ENCODE measurements at regions of chr1 and their contacts with region 1.

Region 1: GRCh38 chr1:43968348-43968948 is 1.4 kb upstream of the DPH2 start:
- DNase-seq: peak; percentile 51
- H3K4me3 Mint-ChIP-seq: no peak overlapping the region
- H3K27ac Mint-ChIP-seq: no peak overlapping the region
- H3K4me1 Mint-ChIP-seq: no peaks in the 10 kb centered on the region
- H3K27me3 Mint-ChIP-seq: no peaks in the 10 kb centered on the region
- CTCF ChIP-seq: no peak

Region 2: DNA sequence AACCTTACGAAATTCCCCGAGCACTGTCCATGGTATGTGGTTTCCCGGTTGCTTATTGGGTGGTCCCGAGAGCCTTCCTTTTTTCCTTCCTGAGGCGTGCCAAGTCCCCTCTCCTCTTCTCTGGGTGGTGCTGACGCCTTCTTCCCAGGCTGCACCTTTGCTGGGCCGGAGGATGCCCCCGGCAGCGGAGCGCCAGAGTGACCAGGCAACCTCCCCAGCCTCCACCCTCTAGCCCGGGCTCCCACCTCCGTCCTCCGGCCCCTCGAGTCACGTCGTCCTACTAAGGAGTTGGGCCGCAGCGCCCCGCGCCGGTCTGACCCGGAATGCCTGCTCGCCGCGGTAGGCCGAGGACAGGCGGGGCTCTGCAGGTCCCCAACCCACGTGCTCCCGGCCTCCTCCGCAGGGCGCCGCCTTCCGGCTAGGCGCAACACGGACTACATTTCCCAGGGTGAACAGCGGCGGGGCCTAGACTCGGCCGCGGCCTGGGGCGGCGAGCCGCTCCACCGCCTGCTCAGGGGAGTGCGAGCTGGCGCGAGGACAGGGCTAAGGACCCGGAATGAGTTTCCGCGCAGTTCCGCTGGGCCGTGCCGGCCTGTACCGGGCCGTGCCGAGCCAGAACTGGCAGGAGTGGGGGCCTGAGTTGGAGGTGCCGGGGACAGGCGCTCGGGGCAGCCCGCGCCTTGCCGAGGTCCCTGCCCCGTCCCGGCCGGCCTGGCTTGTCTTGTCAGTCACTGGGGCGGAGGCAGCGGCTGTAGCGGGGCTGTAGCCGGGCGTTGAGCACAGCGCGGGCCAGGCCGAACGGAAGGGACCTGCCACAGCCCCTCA is 22.0 kb before region 1 on chr1 and contains the start of gene IPO13:
- CTCF ChIA-PET with region 1: interaction called, 11 read pairs
- POLR2A ChIA-PET with region 1: interaction called, 28 read pairs
- intact Hi-C with region 1: loop called (anchors 1 kb)
- DNase-seq: peak; percentile 94
- H3K4me3 Mint-ChIP-seq: peak within 1 kb of the TSS; percentile 99
- H3K27ac Mint-ChIP-seq: peak within 1 kb of the TSS; percentile 99
- H3K4me1 Mint-ChIP-seq: peaks cover 30% of the 10 kb centered on the region
- H3K27me3 Mint-ChIP-seq: no peaks in the 10 kb centered on the region
- CTCF ChIP-seq: peak; percentile 56
- total RNA-seq, gene IPO13: 23.9 and 31.4 TPM in 2 replicates

Region 3: GRCh38 chr1:43997295-43997999 is 29.0 kb after region 1 on chr1:
- CTCF ChIA-PET with region 1: no interaction called
- POLR2A ChIA-PET with region 1: no interaction called
- intact Hi-C with region 1: no loop called
- DNase-seq: no peak
- H3K4me3 Mint-ChIP-seq: no peak overlapping the region
- H3K27ac Mint-ChIP-seq: no peak overlapping the region
- H3K4me1 Mint-ChIP-seq: no peaks in the 10 kb centered on the region
- H3K27me3 Mint-ChIP-seq: no peaks in the 10 kb centered on the region
- CTCF ChIP-seq: no peak

Measured in MCF 10A (cell line).